Activated naive CD4-positive, alpha-beta T cell treated with anti-CD3 and anti-CD28 coated beads for 36 hours (primary cell): ENCODE measurements at regions of chr10 and their contacts with region 1.

Region 1: GRCh38 chr10:101782811-101783735 is at the start of gene NPM3:
- DNase-seq: peak; percentile 94
- H3K4me3 Mint-ChIP-seq: peak within 1 kb of the TSS; percentile 100
- H3K27ac Mint-ChIP-seq: peak within 1 kb of the TSS; percentile 97
- H3K4me1 Mint-ChIP-seq: peaks cover 57% of the 10 kb centered on the region
- H3K27me3 Mint-ChIP-seq: peaks cover 9% of the 10 kb centered on the region
- total RNA-seq, gene NPM3: 213 to 230 TPM

Region 2: GRCh38 chr10:101222683-101223273 is 560.3 kb before region 1 on chr10:
- CTCF ChIA-PET with region 1: no interaction called
- intact Hi-C with region 1: loop called (anchors 2 kb)
- DNase-seq: no peak
- H3K4me3 Mint-ChIP-seq: no peak overlapping the region
- H3K27ac Mint-ChIP-seq: no peak overlapping the region
- H3K4me1 Mint-ChIP-seq: peaks cover 41% of the 10 kb centered on the region
- H3K27me3 Mint-ChIP-seq: peaks cover 88% of the 10 kb centered on the region

Region 3: DNA sequence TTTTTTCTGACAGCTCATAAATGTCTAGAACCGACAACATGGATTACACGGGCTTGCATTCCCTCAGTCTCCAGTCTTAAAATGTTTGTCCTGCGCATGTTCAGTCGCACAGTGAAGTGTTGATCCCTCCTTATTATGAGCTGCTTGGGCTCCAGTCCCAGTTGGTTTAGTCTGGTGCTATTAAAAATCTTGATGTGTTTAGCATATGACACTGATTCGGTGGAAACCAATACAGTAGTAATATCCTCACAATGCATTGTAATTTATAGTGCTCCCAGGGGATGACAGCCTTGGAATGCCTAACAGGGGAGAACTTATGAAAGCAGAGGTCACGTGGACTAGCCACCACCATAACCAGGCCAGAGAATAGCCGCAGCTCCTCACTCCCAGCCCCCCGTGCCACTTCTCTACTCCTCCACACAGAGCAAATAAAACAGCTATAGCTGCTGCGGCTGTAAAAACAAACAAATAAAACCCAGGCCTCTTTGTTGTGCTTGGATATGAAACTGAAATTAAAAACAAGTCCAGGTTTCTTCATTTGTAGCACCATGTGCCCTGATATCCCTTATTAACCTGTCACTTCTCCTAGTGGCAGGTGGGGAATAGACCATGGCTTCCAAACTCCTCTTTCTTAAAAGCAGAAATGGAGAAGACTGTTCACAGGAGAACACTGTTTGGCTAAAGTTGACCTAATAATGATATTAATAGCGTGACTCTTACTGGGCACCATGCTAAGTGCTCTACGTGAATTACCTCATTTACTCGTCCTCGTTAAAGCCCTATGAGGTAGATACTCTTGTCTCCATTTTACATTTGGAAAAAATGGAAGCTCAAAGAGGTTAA is 187.3 kb before region 1 on chr10:
- CTCF ChIA-PET with region 1: interaction called, 91 read pairs
- intact Hi-C with region 1: no loop called
- DNase-seq: no peak
- H3K4me3 Mint-ChIP-seq: no peak overlapping the region
- H3K27ac Mint-ChIP-seq: no peak overlapping the region
- H3K4me1 Mint-ChIP-seq: no peaks in the 10 kb centered on the region
- H3K27me3 Mint-ChIP-seq: no peaks in the 10 kb centered on the region

Region 4: GRCh38 chr10:101708073-101708472 is 75.0 kb before region 1 on chr10:
- CTCF ChIA-PET with region 1: no interaction called
- intact Hi-C with region 1: loop called (anchors 2 kb)
- DNase-seq: no peak
- H3K4me3 Mint-ChIP-seq: no peak overlapping the region
- H3K27ac Mint-ChIP-seq: no peak overlapping the region
- H3K4me1 Mint-ChIP-seq: peaks cover 20% of the 10 kb centered on the region
- H3K27me3 Mint-ChIP-seq: peaks cover 46% of the 10 kb centered on the region

Region 5: DNA sequence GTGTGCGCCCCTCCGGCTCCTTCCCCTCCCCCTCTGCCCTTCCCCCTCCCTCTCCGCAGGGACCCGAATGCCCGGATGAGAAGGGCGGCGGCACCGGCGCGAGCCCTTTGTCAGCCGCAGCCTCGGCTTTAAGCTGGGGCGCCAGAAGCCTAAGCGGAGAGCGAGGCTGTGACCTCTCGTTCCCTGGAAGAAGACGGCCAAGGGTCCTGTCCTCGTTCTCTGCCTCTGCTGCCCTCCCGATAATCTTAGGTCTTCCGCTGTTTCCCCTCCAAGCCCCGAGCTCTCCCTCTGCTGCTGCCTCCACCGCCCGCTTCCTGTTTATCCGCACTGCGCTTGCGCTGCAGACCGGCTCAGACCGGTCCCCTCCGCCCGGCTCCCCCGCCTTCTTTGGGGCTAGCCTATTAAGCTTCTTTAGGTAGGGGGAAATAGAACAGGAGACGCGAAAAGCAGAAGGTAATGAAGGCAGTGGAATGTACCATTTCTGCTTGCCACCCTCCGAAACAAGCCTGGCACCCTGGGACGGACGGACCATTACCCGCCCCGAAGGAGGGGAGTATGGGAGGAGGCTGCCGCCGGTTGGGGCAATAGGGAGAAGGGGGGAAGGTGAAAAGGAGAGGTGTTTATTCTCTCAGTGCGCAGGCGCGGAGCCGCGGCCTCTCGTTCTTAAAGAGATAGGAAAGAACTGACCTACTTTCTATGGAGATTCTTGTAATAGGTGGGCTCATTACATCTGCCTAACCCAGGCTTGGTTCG is 35.2 kb after region 1 on chr10 and contains the start of gene OGA:
- CTCF ChIA-PET with region 1: interaction called, 7 read pairs
- intact Hi-C with region 1: loop called (anchors 1 kb)
- DNase-seq: peak; percentile 99
- H3K4me3 Mint-ChIP-seq: peak within 1 kb of the TSS; percentile 92
- H3K27ac Mint-ChIP-seq: peak within 1 kb of the TSS; percentile 93
- H3K4me1 Mint-ChIP-seq: peaks cover 40% of the 10 kb centered on the region
- H3K27me3 Mint-ChIP-seq: no peaks in the 10 kb centered on the region
- total RNA-seq, gene OGA: 90.8 to 96.3 TPM

Region 6: GRCh38 chr10:101879456-101880231 is 96.6 kb after region 1 on chr10:
- CTCF ChIA-PET with region 1: no interaction called
- intact Hi-C with region 1: no loop called
- DNase-seq: no peak
- H3K4me3 Mint-ChIP-seq: no peak overlapping the region
- H3K27ac Mint-ChIP-seq: no peak overlapping the region
- H3K4me1 Mint-ChIP-seq: peaks cover 7% of the 10 kb centered on the region
- H3K27me3 Mint-ChIP-seq: no peaks in the 10 kb centered on the region

Region 7: GRCh38 chr10:102072673-102073527 is 289.8 kb after region 1 on chr10:
- CTCF ChIA-PET with region 1: interaction called, 3 read pairs
- intact Hi-C with region 1: loop called (anchors 1 kb)
- DNase-seq: peak; percentile 90
- H3K4me3 Mint-ChIP-seq: no peak overlapping the region
- H3K27ac Mint-ChIP-seq: no peak overlapping the region
- H3K4me1 Mint-ChIP-seq: no peaks in the 10 kb centered on the region
- H3K27me3 Mint-ChIP-seq: no peaks in the 10 kb centered on the region